HCT116 (cell line): ENCODE measurements at regions of chr10 and their contacts with region 1.

Region 1: GRCh38 chr10:102450194-102450938 is 977 bp downstream of the C10orf95 start:
- DNase-seq: peak; percentile 82
- ATAC-seq: peak; percentile 76
- H3K4me3 ChIP-seq: peak overlapping the region; percentile 72 to 100
- H3K27ac ChIP-seq: peak overlapping the region; percentile 98
- H3K4me1 ChIP-seq: peaks cover 28 to 38% of the 10 kb centered on the region in 2 experiments
- H3K27me3 ChIP-seq: no peaks in the 10 kb centered on the region
- CTCF ChIP-seq: no peak
- POLR2A ChIP-seq: peak; percentile 94
- RAD21 ChIP-seq: no peak

Region 2: GRCh38 chr10:101397140-101397539 is 1053.2 kb before region 1 on chr10:
- CTCF ChIA-PET with region 1: no interaction called
- POLR2A ChIA-PET with region 1: no interaction called
- RAD21 ChIA-PET with region 1: no interaction called
- intact Hi-C with region 1: no loop called
- DNase-seq: peak; percentile 6
- ATAC-seq: no peak
- H3K4me3 ChIP-seq: no peak overlapping the region
- H3K27ac ChIP-seq: no peak overlapping the region
- H3K4me1 ChIP-seq: no peaks in the 10 kb centered on the region
- H3K27me3 ChIP-seq: no peaks in the 10 kb centered on the region
- CTCF ChIP-seq: no peak
- POLR2A ChIP-seq: no peak
- RAD21 ChIP-seq: no peak

Region 3: GRCh38 chr10:102432162-102432950 is 18.0 kb before region 1 on chr10 and contains the start of gene CUEDC2:
- CTCF ChIA-PET with region 1: interaction called, 3 read pairs
- POLR2A ChIA-PET with region 1: interaction called, 36 read pairs
- RAD21 ChIA-PET with region 1: no interaction called
- intact Hi-C with region 1: loop called (anchors 1 kb)
- DNase-seq: peak; percentile 98
- ATAC-seq: peak; percentile 95
- H3K4me3 ChIP-seq: peak within 1 kb of the TSS; percentile 90 to 91
- H3K27ac ChIP-seq: peak within 1 kb of the TSS; percentile 84
- H3K4me1 ChIP-seq: peaks cover 0 to 26% of the 10 kb centered on the region in 2 experiments; a peak in 2 of 4 replicates
- H3K27me3 ChIP-seq: peaks cover 7% of the 10 kb centered on the region; the same call in 1 of the 2 replicates
- CTCF ChIP-seq: no peak
- POLR2A ChIP-seq: peak; percentile 84
- RAD21 ChIP-seq: no peak
- total RNA-seq, gene CUEDC2: 96.7 TPM

Region 4: DNA sequence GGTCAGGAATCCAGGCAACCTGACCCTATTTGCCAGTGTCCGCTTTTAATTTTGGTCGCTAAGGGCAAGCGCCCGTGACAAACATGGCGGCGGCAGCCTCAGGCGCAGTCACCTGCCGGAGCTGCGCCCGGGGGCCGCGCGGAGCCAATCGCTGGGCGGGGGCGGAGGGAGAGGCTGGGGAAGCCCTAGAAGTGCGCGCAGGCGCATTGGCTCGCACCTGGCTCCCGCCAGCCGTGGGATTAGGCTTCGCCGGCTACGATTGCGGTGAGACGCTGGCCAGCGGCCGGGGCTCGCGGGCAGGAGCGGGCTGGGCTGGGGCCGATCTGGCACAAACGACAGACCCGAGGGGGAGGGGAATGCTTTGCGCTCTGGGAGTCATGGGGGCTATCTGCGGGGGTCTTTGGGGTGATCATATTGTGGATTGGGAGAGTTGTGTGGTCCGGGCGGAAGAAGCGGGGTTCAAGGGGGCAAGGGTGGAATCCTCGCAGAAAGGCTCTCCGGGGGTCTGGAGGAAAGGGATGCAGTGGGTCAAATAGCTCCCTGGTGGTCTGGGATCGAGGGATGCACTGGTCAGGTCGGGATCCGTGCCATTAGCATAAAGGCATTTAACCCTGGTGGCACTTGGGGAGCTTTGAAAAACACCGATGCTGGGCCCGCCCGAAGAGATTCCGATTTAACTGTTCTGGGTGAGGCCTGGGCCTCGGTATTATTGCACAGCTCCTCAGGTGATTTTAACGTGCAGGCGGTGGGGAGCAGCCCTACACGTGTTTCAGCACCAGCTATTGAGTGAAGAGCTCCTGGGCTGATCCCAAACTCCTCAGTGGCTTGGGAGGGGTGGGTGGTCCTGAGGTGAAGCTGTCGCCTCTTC is 11.1 kb after region 1 on chr10:
- CTCF ChIA-PET with region 1: interaction called, 7 read pairs
- POLR2A ChIA-PET with region 1: interaction called, 39 read pairs
- RAD21 ChIA-PET with region 1: interaction called in 1 of 2 experiments, 3 read pairs
- intact Hi-C with region 1: no loop called
- DNase-seq: peak; percentile 87
- ATAC-seq: peak; percentile 85
- H3K4me3 ChIP-seq: peak overlapping the region; percentile 72 to 73
- H3K27ac ChIP-seq: peak overlapping the region; percentile 60
- H3K4me1 ChIP-seq: peaks cover 31 to 38% of the 10 kb centered on the region in 2 experiments
- H3K27me3 ChIP-seq: no peaks in the 10 kb centered on the region
- CTCF ChIP-seq: no peak
- POLR2A ChIP-seq: peak; percentile 80
- RAD21 ChIP-seq: no peak

Region 5: GRCh38 chr10:102714621-102715455 is 264.5 kb after region 1 on chr10 and contains the start of gene SFXN2:
- CTCF ChIA-PET with region 1: no interaction called
- POLR2A ChIA-PET with region 1: no interaction called
- RAD21 ChIA-PET with region 1: no interaction called
- intact Hi-C with region 1: no loop called
- DNase-seq: no peak
- ATAC-seq: peak; percentile 46
- H3K4me3 ChIP-seq: peak within 1 kb of the TSS; percentile 88 to 95
- H3K27ac ChIP-seq: peak within 1 kb of the TSS; percentile 77
- H3K4me1 ChIP-seq: peaks cover 18 to 29% of the 10 kb centered on the region in 2 experiments
- H3K27me3 ChIP-seq: no peaks in the 10 kb centered on the region
- CTCF ChIP-seq: peak in 1 of 3 experiments; percentile 43; a peak in 2 of 6 replicates
- POLR2A ChIP-seq: peak; percentile 77
- RAD21 ChIP-seq: no peak
- total RNA-seq, gene SFXN2: 22.9 TPM